ENCODE measurements at regions of chr9 and their contacts with region 1.

Region 1: DNA sequence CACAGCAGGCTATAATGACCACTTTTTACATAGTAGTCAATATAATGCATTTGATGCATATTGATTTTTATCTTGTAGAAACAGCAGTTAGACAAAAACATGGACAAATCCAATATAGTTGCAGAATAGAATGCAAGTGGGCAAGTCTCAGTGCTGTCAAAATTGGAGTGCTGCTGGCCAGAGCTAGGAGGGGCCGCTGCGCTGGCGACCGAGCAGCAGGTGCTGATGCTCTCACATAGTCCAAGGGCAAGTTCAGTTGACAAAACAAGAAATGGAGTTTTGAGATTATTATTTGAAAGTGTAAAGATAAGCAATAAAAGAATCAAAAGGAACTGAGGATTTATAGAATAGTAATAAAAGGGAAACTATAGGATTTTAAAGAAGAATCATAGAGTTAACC is 60.6 kb upstream of the CDK20 start:
- DNase-seq: no peak
- H3K4me3 ChIP-seq: no peak overlapping the region
- H3K27ac ChIP-seq: no peak overlapping the region
- H3K4me1 ChIP-seq: no peaks in the 10 kb centered on the region
- H3K27me3 ChIP-seq: no peaks in the 10 kb centered on the region
- CTCF ChIP-seq: no peak
- EP300 ChIP-seq: no peak
- POLR2A ChIP-seq: no peak

Region 2: GRCh38 chr9:88018101-88018500 is 16.9 kb before region 1 on chr9:
- intact Hi-C with region 1: loop called in 1 of 4 experiments (anchors 1 kb)
- DNase-seq: no peak
- H3K4me3 ChIP-seq: no peak overlapping the region
- H3K27ac ChIP-seq: no peak overlapping the region
- H3K4me1 ChIP-seq: no peaks in the 10 kb centered on the region
- H3K27me3 ChIP-seq: no peaks in the 10 kb centered on the region
- CTCF ChIP-seq: no peak
- EP300 ChIP-seq: no peak
- POLR2A ChIP-seq: no peak

Measured in ovary (tissue), 10 donors.